Activated CD4-positive, alpha-beta T cell treated with anti-CD3 and anti-CD28 coated beads for 36 hours (primary cell): ENCODE measurements at regions of chr2 and their contacts with region 1.

Region 1: GRCh38 chr2:221517696-221518151 is 54.4 kb downstream of the EPHA4 start:
- DNase-seq: peak; percentile 84
- ATAC-seq: peak; percentile 86
- H3K4me3 Mint-ChIP-seq: no peak overlapping the region
- H3K27ac Mint-ChIP-seq: no peak overlapping the region
- H3K4me1 Mint-ChIP-seq: peaks cover 13% of the 10 kb centered on the region
- H3K27me3 Mint-ChIP-seq: no peaks in the 10 kb centered on the region

Region 2: GRCh38 chr2:220814441-220814840 is 703.3 kb before region 1 on chr2:
- CTCF ChIA-PET with region 1: no interaction called
- POLR2A ChIA-PET with region 1: no interaction called
- intact Hi-C with region 1: no loop called
- DNase-seq: no peak
- ATAC-seq: no peak
- H3K4me3 Mint-ChIP-seq: no peak overlapping the region
- H3K27ac Mint-ChIP-seq: no peak overlapping the region
- H3K4me1 Mint-ChIP-seq: no peaks in the 10 kb centered on the region
- H3K27me3 Mint-ChIP-seq: peaks cover 5% of the 10 kb centered on the region

Region 3: DNA sequence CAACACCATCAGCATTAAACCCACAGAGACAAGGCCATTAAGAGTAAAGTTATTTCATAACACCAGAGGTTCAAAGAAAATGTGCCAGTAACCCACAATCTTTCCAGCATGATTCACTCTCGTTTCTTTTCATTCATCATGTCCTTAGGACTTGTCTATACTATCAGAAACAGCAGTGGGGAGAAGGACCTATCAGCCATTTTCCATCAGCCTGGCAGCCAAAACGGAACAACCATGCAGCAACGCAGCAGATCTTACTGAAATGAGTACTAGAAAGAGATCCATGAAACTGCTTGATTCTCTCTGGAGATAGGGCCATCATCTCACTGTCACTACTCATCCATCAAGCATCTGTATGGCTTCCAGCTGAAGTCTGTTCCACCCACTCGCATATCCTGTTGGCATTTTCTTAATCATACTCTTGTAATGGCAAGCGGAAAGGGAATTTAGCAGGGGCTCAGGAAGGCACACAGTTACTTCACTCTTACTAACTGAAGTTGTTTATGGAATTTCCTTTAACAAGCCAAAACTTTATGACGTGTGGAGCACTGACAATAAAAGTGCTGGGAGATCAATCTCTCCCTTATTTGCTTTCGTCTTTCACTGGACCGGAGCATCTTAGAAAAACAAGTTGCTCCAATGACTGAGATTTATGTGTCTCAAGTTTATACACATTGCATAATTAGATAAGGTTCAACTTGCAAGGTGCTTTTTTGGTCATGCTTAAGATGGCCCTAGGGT is 15.3 kb before region 1 on chr2:
- CTCF ChIA-PET with region 1: interaction called, 3 read pairs
- POLR2A ChIA-PET with region 1: interaction called, 6 read pairs
- intact Hi-C with region 1: loop called (anchors 1 kb)
- DNase-seq: peak; percentile 56
- ATAC-seq: peak; percentile 84
- H3K4me3 Mint-ChIP-seq: no peak overlapping the region
- H3K27ac Mint-ChIP-seq: peak overlapping the region; percentile 66
- H3K4me1 Mint-ChIP-seq: peaks cover 37% of the 10 kb centered on the region
- H3K27me3 Mint-ChIP-seq: no peaks in the 10 kb centered on the region

Region 4: GRCh38 chr2:221554769-221555493 is 37.2 kb after region 1 on chr2:
- CTCF ChIA-PET with region 1: interaction called, 3 read pairs
- POLR2A ChIA-PET with region 1: interaction called, 3 read pairs
- intact Hi-C with region 1: loop called (anchors 1 to 5 kb)
- DNase-seq: peak; percentile 52
- ATAC-seq: peak; percentile 82
- H3K4me3 Mint-ChIP-seq: peak overlapping the region; percentile 46
- H3K27ac Mint-ChIP-seq: peak overlapping the region; percentile 76
- H3K4me1 Mint-ChIP-seq: peaks cover 48% of the 10 kb centered on the region
- H3K27me3 Mint-ChIP-seq: no peaks in the 10 kb centered on the region